ENCODE measurements at regions of chr15 and their contacts with region 1.

Region 1: DNA sequence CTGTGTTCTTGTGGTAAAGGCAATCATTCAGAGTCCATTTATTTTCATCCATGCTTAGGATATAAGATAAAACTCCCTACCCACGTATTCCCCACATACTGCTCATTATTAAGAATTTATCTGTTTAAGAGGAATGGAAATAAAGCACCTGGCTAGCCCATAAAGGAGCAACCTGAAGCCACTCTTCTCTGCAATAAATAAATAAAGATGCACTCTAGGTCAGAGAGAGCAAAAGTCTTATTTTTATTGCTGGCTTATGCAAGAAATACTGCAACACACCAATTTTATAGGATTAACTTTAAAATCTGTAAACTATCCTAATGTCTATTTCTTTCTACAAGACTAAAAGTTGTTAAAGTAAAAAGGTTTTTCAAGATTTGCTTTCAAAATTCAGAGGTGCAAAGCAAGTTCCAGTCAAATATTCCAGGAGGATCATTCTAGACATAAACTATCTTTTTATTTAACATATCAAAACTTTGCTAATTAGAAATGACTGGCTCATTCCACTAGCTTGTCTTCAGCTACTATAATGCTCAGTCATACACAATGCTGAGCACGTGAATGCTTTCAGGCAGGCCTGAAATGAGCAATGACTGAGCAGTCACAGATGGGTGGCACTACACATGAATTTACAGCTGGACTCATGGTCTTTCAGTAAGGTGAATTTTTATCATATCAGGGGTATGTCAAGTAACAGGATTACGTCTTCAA is 7.1 kb downstream of the TJP1 start:
- DNase-seq: no peak
- H3K4me3 ChIP-seq: no peak overlapping the region
- H3K27ac ChIP-seq: no peak overlapping the region
- H3K4me1 ChIP-seq: peaks cover 4 to 11% of the 10 kb centered on the region in 2 donors
- H3K27me3 ChIP-seq: no peaks in the 10 kb centered on the region
- CTCF ChIP-seq: no peak

Region 2: DNA sequence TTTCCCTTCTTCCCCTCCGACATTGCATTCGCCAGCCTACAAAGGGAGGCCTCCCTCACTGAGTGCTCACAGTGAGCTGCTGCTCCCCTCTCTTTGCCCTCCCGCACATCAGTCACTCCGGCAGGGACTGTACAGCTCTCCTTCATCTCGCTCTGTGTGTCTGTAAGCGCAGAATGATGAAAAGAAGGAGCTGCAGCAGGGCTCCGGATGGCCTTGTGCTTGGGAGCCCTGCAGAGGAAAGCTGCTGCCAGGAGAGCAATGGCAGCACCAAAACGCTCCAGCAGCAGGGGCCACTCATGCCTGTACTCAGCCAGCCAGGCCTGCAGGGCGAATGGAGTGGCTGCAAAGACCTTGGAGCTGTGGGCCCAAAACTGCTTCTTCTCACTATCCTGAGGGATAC is 438.6 kb before region 1 on chr15:
- intact Hi-C with region 1: no loop called
- DNase-seq: no peak
- H3K4me3 ChIP-seq: no peak overlapping the region
- H3K27ac ChIP-seq: no peak overlapping the region
- H3K4me1 ChIP-seq: no peaks in the 10 kb centered on the region
- H3K27me3 ChIP-seq: no peaks in the 10 kb centered on the region
- CTCF ChIP-seq: no peak

Region 3: DNA sequence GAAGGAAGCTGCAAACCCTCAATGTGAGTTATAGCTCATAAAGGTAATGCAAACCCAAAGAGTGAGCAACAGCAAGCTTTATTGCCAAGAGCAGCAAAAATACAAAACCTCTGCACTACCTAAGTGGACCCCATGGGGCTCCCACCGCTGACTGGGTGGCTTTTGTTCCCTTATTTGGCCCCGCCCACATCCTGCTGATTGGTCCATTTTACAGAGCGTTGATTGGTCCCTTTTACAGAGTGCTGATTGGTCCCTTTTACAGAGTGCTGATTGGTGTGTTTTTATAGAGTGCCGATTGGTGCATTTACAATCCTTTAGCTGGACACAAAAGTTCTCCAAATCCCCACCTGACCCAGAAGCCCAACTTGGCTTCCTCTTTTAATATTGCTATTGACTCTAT is 391.0 kb before region 1 on chr15:
- intact Hi-C with region 1: no loop called
- DNase-seq: no peak
- H3K4me3 ChIP-seq: no peak overlapping the region
- H3K27ac ChIP-seq: no peak overlapping the region
- H3K4me1 ChIP-seq: no peaks in the 10 kb centered on the region
- H3K27me3 ChIP-seq: no peaks in the 10 kb centered on the region
- CTCF ChIP-seq: no peak

Region 4: GRCh38 chr15:29774900-29775299 is 40.3 kb before region 1 on chr15:
- intact Hi-C with region 1: loop called (anchors 5 kb)
- DNase-seq: no peak
- H3K4me3 ChIP-seq: no peak overlapping the region
- H3K27ac ChIP-seq: no peak overlapping the region
- H3K4me1 ChIP-seq: peaks cover 0 to 3% of the 10 kb centered on the region in 2 donors
- H3K27me3 ChIP-seq: no peaks in the 10 kb centered on the region
- CTCF ChIP-seq: no peak

Region 5: GRCh38 chr15:29788433-29789034 is 26.6 kb before region 1 on chr15:
- intact Hi-C with region 1: no loop called
- DNase-seq: no peak
- H3K4me3 ChIP-seq: no peak overlapping the region
- H3K27ac ChIP-seq: no peak overlapping the region
- H3K4me1 ChIP-seq: peaks cover 0 to 10% of the 10 kb centered on the region in 2 donors
- H3K27me3 ChIP-seq: no peaks in the 10 kb centered on the region
- CTCF ChIP-seq: no peak

Region 6: GRCh38 chr15:29883126-29883525 is 68.0 kb after region 1 on chr15:
- intact Hi-C with region 1: loop called (anchors 2 kb)
- DNase-seq: no peak
- H3K4me3 ChIP-seq: no peak overlapping the region
- H3K27ac ChIP-seq: peak overlapping the region in 1 of 2 donors; percentile 15
- H3K4me1 ChIP-seq: peaks cover 0 to 13% of the 10 kb centered on the region in 2 donors
- H3K27me3 ChIP-seq: no peaks in the 10 kb centered on the region
- CTCF ChIP-seq: no peak

Region 7: DNA sequence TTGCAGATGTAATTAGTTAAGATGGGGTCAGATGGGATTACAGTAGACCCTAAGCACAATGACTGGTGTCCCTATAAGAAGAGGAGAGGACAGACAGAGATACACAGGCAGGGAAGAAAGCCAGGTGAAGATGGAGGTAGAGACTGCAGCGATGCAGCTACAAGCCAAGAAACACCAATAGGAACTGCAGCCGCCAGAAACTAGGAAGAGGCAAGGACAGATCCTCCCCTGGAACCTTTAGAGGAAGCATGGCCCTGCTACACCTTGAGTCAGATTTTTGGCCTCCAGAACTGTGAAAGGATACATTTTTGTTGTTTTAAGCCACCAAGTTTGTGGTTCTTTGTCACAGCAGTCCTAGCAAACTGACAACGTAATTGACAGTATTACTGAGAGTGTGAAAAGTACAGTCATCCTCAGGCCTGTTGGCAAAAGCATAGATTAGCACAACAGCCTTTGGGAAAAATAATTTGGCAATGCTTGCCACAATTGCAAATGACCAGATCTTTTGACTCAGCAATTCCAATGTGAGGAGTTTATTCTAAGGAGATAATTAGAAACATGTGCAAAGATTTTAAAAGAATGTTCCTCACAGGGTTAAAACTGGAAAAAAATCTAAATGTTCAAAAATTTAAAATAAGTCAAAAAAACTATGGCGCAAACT is 89.7 kb after region 1 on chr15:
- intact Hi-C with region 1: no loop called
- DNase-seq: no peak
- H3K4me3 ChIP-seq: no peak overlapping the region
- H3K27ac ChIP-seq: no peak overlapping the region
- H3K4me1 ChIP-seq: no peaks in the 10 kb centered on the region
- H3K27me3 ChIP-seq: no peaks in the 10 kb centered on the region
- CTCF ChIP-seq: no peak